Activated B cell treated with CpG ODN at 0.5 μM for 24 hours (primary cell): ENCODE measurements at regions of chr10 and their contacts with region 1.

Region 1: DNA sequence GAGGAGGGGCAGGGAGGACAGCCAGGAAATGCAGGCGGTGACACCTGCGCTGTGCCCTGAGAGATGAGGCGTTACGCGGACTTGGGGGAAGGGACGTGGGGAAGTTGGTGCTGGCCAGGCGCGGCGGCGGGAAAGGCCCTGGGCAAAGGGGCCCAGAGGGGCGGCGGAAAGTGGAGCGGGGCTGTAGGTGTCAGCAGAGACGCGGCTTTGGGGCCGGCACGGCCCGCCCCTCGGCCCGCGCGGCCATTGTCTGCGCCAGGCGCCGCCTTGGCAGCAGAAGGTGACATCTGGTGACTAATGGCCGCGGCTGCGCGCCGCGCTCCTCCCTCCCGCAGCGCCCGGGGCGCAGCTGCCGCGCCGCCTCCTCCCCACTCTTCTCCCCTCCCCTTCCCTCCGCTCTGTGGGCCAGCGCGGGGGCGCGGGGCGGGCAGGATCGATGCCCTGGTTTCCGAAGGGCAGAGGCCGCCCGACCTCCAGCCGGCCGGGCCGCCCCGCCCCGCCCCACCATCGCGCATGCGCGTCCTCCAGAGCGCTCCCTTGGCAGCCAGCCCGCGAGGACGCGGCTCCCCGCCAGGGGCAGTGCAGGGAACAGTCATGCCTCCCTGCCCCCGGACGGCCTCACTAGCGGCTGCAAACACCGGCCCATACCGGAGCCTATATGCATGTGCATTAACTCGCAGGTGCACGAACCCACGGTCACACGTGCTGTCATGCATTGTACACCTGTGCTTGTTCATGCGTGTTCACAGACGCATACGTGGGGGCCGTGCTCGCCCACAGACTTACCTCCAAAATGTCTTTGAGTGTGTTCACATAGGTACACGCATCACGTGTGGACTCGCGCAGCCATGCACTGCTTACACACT is 269.6 kb downstream of the RPS24 start:
- DNase-seq: peak; percentile 96
- ATAC-seq: peak; percentile 87
- H3K4me3 Mint-ChIP-seq: peak overlapping the region; percentile 92
- H3K27ac Mint-ChIP-seq: peak overlapping the region; percentile 93
- H3K4me1 Mint-ChIP-seq: peaks cover 47% of the 10 kb centered on the region
- H3K27me3 Mint-ChIP-seq: no peaks in the 10 kb centered on the region
- CTCF ChIP-seq: peak; percentile 44

Region 2: GRCh38 chr10:77710759-77711682 is 592.2 kb before region 1 on chr10:
- CTCF ChIA-PET with region 1: no interaction called
- POLR2A ChIA-PET with region 1: no interaction called
- intact Hi-C with region 1: no loop called
- DNase-seq: peak; percentile 73
- ATAC-seq: peak; percentile 95
- H3K4me3 Mint-ChIP-seq: peak overlapping the region; percentile 76
- H3K27ac Mint-ChIP-seq: no peak overlapping the region
- H3K4me1 Mint-ChIP-seq: peaks cover 12% of the 10 kb centered on the region
- H3K27me3 Mint-ChIP-seq: peaks cover 16% of the 10 kb centered on the region
- CTCF ChIP-seq: peak; percentile 17

Region 3: DNA sequence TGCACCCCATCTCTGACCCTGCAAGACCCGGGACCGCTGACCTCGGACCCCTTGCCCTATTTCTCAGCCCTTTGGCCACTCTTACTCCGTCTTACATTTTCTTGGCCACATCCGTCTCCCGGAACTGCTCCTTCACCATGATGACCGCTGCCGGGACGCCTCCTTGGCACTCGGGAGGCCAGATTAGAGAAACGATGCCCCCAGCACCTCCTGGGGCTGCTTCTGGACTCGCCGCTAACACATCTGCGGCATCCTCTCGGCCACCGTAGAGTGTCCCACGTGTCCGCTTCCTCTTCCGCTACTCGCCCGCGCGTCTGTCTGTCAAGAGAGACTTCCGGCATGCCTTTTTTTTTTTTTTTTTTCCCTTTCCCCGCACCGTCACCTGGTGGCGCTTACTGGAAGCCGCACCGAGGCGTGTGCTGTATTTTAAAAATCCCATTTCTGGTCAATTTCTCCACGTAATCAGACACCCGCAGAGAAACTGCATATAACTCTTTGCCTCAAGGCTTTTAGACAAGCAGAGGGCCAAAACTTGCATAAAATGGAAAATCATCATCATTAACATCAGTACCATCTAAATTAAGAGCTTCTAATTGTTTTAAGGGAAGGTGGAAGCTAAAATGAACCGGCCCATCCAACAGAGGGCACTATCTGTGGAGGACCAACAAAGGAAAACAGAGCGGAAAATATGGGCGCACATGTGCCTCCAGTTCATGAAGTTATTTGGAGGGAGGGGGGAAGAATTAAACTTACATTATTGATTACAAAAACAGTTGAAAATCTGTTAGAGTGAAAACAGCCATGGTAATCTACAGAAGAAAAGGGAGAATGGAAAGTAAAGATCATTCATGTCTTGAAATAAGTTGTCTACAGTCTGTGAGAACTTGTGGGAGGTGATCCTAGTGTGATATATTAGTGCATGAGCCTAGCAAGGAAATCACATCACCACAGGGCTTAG is 273.7 kb before region 1 on chr10 and contains the start of gene POLR3A:
- CTCF ChIA-PET with region 1: no interaction called
- POLR2A ChIA-PET with region 1: interaction called, 3 read pairs
- intact Hi-C with region 1: loop called (anchors 1 kb)
- DNase-seq: peak; percentile 85
- ATAC-seq: peak; percentile 57
- H3K4me3 Mint-ChIP-seq: peak within 1 kb of the TSS; percentile 99
- H3K27ac Mint-ChIP-seq: peak within 1 kb of the TSS; percentile 88
- H3K4me1 Mint-ChIP-seq: peaks cover 43% of the 10 kb centered on the region
- H3K27me3 Mint-ChIP-seq: no peaks in the 10 kb centered on the region
- CTCF ChIP-seq: no peak
- total RNA-seq, gene POLR3A: 17.0 and 20.3 TPM in 2 replicates

Region 4: DNA sequence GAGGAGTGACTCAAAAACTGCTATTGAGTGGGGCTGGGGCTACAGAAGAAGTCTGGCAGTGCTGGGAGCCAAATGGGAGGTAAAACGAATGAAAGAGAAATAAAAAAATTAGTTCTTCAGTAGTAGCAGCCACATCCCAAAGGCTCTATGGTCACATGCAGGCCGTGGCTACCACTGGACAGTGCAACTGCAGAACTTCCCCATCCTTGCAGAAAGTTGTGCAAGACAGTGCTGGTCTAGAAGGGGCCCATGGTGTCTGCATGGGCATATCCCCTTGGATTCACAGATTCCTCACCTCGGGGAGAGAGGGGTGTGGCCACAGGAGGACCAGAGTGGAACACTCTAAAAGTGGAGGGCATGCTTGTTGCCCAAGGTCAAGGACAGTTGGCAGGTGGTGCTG is 221.9 kb before region 1 on chr10:
- CTCF ChIA-PET with region 1: no interaction called
- POLR2A ChIA-PET with region 1: no interaction called
- intact Hi-C with region 1: no loop called
- DNase-seq: no peak
- ATAC-seq: no peak
- H3K4me3 Mint-ChIP-seq: no peak overlapping the region
- H3K27ac Mint-ChIP-seq: no peak overlapping the region
- H3K4me1 Mint-ChIP-seq: no peaks in the 10 kb centered on the region
- H3K27me3 Mint-ChIP-seq: peaks cover 10% of the 10 kb centered on the region
- CTCF ChIP-seq: no peak

Region 5: DNA sequence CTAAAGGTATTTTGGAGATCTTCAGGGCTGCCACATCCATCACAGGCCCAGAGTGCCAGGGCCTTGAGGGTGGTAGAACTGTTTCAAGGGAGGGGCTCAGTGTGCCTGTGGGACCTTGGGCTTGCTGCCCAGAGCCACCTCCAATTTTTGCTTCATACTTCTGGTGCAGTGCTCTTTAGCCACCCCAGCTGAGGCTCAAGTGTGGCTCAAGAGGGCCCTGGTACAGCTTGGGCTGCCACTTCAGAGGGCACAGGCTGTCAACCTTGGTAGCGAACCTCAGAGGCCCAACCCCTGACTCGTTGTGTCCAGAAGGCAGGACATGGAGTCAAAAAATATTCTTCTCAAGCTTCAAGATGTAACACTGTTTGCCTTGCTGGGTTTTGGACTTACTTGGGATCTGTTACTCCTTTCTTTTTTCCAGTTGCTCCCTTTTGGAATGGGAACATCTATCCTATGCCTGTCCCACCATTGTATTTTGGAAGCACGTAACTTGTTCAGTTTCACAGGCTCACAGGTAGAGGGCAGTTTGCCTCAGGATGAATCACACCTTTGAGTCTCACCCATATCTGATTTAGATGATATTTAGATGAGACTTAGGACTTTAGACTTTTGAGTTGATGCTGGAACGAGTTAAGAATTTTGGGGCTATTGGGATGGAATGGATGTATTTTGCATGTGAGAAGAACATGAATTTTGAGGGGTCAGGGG is 44.7 kb before region 1 on chr10:
- CTCF ChIA-PET with region 1: no interaction called
- POLR2A ChIA-PET with region 1: no interaction called
- intact Hi-C with region 1: loop called (anchors 2 kb)
- DNase-seq: no peak
- ATAC-seq: no peak
- H3K4me3 Mint-ChIP-seq: no peak overlapping the region
- H3K27ac Mint-ChIP-seq: no peak overlapping the region
- H3K4me1 Mint-ChIP-seq: no peaks in the 10 kb centered on the region
- H3K27me3 Mint-ChIP-seq: peaks cover 11% of the 10 kb centered on the region
- CTCF ChIP-seq: no peak

Region 6: DNA sequence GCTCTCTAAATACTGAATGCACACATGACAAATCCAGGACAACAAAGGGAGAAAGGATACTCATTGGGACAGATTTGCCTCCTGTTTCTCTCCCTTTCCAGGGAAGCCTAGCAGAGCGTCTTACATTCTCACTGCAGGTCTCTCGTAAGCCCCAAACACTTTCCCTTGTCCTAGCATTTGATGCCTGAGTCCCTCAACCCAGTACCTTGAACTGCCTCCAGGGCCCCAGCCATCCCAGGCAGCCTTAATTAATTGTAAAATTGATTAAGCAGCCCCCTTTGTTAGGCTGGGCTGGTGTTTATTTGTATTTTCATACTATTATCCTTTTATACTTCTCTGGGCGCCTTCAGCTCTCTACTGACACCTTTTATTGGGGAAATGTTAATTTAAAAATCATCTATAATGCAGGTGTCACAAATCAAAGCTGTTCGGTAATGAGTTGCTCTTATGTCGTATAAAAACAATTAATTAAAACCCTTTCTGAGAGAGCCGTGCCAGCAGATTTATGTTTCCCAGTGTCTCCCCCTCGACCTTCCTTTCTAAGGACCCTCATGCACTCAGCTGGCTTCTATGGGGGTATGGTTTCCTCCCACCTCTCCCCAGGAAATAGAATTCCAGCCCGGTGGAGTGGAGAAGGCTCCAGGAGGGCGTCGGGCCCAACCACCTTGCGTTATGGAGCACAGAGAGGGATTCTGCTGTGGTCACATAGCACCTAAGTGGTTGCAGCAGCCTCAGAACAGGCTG is 25.7 kb before region 1 on chr10:
- CTCF ChIA-PET with region 1: no interaction called
- POLR2A ChIA-PET with region 1: no interaction called
- intact Hi-C with region 1: no loop called
- DNase-seq: no peak
- ATAC-seq: no peak
- H3K4me3 Mint-ChIP-seq: no peak overlapping the region
- H3K27ac Mint-ChIP-seq: no peak overlapping the region
- H3K4me1 Mint-ChIP-seq: no peaks in the 10 kb centered on the region
- H3K27me3 Mint-ChIP-seq: peaks cover 10% of the 10 kb centered on the region
- CTCF ChIP-seq: no peak

Region 7: GRCh38 chr10:78664929-78665553 is 361.8 kb after region 1 on chr10:
- CTCF ChIA-PET with region 1: no interaction called
- POLR2A ChIA-PET with region 1: no interaction called
- intact Hi-C with region 1: no loop called
- DNase-seq: no peak
- ATAC-seq: no peak
- H3K4me3 Mint-ChIP-seq: no peak overlapping the region
- H3K27ac Mint-ChIP-seq: no peak overlapping the region
- H3K4me1 Mint-ChIP-seq: no peaks in the 10 kb centered on the region
- H3K27me3 Mint-ChIP-seq: peaks cover 29% of the 10 kb centered on the region
- CTCF ChIP-seq: no peak

Region 8: DNA sequence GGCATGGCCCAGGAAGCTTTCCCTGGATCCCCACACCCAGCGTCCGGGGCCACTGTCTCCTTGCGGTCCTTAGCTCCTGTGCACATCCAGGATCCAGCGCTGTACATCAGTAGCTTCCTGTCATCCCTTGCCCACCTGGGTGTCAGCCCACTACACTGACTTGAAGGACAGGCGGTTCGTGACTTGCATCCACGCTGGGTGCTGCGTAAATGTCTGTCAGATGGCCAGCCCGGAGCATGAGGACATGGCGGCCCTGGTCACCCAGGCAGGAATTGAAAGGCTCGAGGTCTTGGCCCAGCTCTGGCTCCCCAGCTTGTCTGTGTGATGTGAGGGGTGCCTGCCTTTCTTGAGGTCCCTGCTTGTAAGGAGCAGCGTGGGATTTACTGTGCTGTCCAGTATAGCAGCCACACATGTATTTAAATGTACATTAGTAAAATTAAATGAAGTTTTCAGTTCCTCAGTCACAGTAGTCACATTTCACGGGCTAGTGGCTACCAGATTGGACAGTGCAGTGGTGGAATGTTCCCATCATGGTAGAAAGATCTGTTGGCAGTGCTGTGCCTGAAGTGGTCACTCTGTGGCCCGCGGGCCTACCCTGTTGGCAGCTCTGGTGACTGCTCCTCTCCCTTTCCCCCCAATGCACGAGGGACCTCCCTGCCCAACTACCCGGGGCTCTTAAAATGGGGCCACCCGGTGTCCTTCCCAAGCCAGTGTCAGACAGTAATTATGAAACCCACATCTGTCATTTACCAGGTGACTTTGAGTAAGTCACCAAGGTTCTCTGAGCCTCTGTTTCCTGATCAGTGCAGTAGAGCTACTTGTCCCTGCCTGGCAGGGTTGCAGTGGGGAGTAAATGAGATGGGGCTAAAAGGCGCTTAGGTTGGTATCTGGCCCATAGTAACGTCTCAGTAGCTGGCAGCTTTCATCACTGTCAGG is 946.2 kb after region 1 on chr10:
- CTCF ChIA-PET with region 1: no interaction called
- POLR2A ChIA-PET with region 1: no interaction called
- intact Hi-C with region 1: loop called (anchors 2 kb)
- DNase-seq: peak; percentile 68
- ATAC-seq: peak; percentile 57
- H3K4me3 Mint-ChIP-seq: peak overlapping the region; percentile 79
- H3K27ac Mint-ChIP-seq: peak overlapping the region; percentile 98
- H3K4me1 Mint-ChIP-seq: peaks cover 100% of the 10 kb centered on the region
- H3K27me3 Mint-ChIP-seq: no peaks in the 10 kb centered on the region
- CTCF ChIP-seq: no peak

Region 9: DNA sequence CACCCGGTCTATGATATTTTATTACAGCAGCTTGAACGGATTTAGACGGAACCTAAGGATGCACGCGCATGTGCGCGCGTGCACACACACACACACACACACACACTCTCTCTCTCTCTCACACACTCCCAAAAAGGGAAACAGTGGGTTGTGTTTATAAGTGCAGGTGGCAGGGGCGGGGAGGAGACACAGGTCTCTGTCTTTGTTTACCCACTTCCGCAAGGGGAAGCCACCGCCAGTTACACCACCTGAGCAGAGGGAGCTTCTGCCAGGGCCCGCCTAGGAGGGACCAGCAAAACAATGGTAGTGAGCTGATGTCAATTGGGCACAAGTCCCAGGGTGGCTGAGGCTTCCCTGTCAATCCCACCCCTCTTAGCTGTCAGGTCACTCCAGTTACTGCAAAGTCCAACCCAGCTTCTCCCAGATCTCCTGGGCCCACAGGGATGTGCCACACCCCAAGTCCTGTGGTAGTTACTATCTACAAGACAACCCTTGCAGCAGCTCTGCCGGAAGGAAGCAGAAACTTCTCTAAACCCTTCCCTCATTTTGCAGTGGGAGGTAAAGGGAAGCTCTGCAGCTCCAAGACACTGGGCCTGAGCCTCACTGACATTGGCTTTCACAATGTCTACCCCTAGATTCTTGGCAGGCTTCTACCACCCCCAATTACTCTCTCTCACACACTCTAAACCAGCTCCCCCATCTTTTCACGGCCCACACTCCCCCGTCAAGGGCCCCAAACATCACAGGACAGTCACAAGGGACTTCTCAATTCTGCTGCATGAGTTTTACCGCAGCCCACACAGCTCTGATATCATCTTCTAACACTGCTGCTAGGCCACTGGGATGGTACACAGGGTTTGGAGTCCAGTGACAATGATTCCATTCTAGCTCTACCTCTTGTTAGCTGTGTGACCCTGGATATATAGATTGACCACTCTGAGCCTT is 1884.5 kb after region 1 on chr10:
- CTCF ChIA-PET with region 1: no interaction called
- POLR2A ChIA-PET with region 1: no interaction called
- intact Hi-C with region 1: loop called (anchors 2 kb)
- DNase-seq: peak; percentile 57
- ATAC-seq: peak; percentile 91
- H3K4me3 Mint-ChIP-seq: peak overlapping the region; percentile 68
- H3K27ac Mint-ChIP-seq: peak overlapping the region; percentile 91
- H3K4me1 Mint-ChIP-seq: peaks cover 82% of the 10 kb centered on the region
- H3K27me3 Mint-ChIP-seq: no peaks in the 10 kb centered on the region
- CTCF ChIP-seq: no peak